MCF 10A (cell line): ENCODE measurements at regions of chr3 and their contacts with region 1.

Region 1: DNA sequence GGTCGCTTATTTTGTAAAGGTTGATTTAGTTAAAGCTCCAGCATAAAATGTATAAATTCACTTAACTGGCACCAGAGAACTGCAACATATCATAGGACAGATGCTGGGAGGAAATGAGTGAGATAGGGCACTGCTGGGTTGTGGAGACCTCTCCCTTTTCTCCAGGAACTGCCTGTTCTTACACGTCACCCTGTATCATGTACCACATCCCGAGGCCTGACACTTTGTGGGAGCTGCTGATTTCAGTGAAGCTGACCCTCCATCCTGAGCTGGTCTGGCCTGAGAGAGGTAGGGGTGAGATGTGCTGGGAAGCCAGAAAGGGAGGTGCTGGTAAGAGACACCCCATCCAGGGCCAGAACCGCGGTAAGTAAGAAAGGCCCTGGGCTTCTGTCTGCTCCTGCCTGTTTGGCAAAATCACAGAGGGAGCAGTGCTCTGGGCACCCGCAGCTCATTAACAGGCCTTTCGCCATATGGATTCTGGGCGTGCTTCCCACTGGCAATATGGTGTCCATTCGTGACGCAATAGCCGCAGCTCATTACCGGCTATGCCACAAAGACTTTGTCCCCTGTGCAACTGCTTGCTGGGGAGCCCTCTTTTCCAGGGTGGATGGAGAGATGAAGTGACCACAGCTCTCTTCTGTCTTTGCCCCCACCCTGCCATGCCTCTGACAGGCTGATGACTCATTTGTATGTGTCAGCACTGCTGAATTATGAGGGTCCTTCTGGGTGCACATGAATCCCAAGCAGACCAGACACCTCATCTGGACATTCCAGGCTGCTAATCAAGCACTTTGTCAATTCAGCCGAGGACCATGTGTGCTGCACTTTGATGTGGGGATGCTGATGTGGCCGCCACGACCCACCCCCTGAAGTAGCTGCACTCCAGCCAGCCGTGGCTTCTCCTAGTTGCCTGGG is 214.1 kb upstream of the FEZF2 start:
- DNase-seq: peak; percentile 87
- H3K4me3 Mint-ChIP-seq: peak overlapping the region; percentile 38
- H3K27ac Mint-ChIP-seq: peak overlapping the region; percentile 90
- H3K4me1 Mint-ChIP-seq: peaks cover 32% of the 10 kb centered on the region
- H3K27me3 Mint-ChIP-seq: no peaks in the 10 kb centered on the region
- CTCF ChIP-seq: no peak

Region 2: GRCh38 chr3:62462104-62462762 is 125.2 kb before region 1 on chr3:
- CTCF ChIA-PET with region 1: no interaction called
- POLR2A ChIA-PET with region 1: no interaction called
- intact Hi-C with region 1: no loop called
- DNase-seq: no peak
- H3K4me3 Mint-ChIP-seq: no peak overlapping the region
- H3K27ac Mint-ChIP-seq: no peak overlapping the region
- H3K4me1 Mint-ChIP-seq: no peaks in the 10 kb centered on the region
- H3K27me3 Mint-ChIP-seq: peaks cover 100% of the 10 kb centered on the region
- CTCF ChIP-seq: no peak

Region 3: GRCh38 chr3:62601238-62601931 is 13.9 kb after region 1 on chr3:
- CTCF ChIA-PET with region 1: interaction called, 3 read pairs
- POLR2A ChIA-PET with region 1: interaction called, 13 read pairs
- intact Hi-C with region 1: loop called (anchors 2 kb)
- DNase-seq: peak; percentile 68
- H3K4me3 Mint-ChIP-seq: peak overlapping the region; percentile 19
- H3K27ac Mint-ChIP-seq: peak overlapping the region; percentile 94
- H3K4me1 Mint-ChIP-seq: peaks cover 45% of the 10 kb centered on the region
- H3K27me3 Mint-ChIP-seq: no peaks in the 10 kb centered on the region
- CTCF ChIP-seq: no peak

Region 4: DNA sequence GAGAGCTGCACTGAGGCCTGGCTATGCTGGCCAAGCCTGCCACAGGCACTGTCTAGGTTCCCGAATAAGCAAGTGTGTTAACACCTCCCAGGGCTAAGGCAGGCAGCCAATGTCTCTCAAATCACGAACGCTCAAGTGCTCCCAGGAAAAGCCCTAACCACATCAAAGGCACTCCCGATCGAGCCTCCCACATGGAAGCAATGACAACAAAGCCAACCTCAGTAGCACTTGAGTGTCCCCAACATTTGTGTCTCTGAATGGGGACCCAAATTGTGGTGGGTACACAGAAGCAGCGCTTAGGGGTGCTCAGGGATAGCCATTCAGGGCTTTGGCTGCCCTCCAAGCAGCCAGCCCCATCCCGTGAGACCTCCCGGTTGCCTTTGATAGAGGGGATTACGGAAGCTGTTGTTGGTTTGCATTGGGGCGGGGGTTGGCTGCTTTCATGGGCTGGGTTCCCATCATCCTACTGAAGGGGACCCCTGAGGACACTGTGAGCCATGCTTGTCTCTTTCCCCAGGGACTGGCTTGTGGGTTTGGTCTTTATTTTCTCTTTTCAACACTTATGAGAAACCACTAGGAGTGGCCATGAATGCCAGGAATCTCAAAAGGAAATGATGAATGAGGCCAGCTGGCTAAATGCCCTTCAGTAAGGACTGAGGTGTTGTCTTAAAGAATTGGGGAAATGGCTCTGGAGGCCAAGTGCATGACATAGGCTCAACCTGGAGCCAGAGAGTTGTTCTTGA is 20.0 kb after region 1 on chr3:
- CTCF ChIA-PET with region 1: no interaction called
- POLR2A ChIA-PET with region 1: interaction called, 13 read pairs
- intact Hi-C with region 1: no loop called
- DNase-seq: peak; percentile 98
- H3K4me3 Mint-ChIP-seq: peak overlapping the region; percentile 44
- H3K27ac Mint-ChIP-seq: peak overlapping the region; percentile 82
- H3K4me1 Mint-ChIP-seq: peaks cover 60% of the 10 kb centered on the region
- H3K27me3 Mint-ChIP-seq: no peaks in the 10 kb centered on the region
- CTCF ChIP-seq: no peak